ENCODE measurements at regions of chr11 and their contacts with region 1.

Region 1: DNA sequence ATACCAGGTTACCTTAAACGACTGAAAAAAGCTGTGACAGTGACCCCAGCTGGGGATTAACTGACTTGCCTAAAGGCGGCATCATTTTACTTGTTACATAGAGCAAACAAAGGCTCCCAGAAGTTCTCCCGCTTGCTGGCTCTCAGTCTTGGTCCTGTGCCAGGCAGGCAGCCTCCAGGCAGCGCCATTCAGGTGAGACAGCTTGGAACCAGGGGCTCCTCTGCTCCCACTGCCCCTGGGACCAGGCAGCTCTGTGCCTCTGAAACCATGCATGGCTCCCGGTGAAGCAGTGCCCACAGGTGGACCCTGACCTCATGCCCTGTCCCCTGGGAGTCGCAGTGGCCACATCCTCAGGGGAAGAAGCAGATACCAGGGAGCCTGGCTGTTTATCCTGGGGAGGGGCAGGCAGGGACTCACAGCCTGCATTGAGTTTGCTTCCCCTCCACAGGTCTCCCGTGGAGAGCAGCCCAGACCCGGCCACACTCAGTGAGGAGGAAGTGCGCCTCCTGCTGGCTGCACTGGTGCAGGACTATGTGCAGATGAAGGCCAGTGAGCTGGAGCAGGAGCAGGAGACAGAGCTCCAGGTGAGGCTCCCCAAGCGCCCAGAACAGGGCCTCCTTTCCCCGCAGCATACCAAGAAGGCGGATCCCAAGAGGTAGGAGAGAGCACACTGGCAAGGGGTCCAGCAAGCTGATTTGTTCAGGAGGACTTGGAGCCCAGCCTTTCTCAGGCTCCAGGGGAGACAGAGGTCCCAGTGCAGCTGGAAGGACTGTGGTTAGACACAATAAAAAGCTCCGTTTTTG is 15.6 kb upstream of the CYP2R1 start:
- DNase-seq: peak; percentile 91
- H3K4me3 Mint-ChIP-seq: no peak overlapping the region
- H3K27ac Mint-ChIP-seq: no peak overlapping the region
- H3K4me1 Mint-ChIP-seq: peaks cover 36% of the 10 kb centered on the region
- H3K27me3 Mint-ChIP-seq: no peaks in the 10 kb centered on the region

Region 2: DNA sequence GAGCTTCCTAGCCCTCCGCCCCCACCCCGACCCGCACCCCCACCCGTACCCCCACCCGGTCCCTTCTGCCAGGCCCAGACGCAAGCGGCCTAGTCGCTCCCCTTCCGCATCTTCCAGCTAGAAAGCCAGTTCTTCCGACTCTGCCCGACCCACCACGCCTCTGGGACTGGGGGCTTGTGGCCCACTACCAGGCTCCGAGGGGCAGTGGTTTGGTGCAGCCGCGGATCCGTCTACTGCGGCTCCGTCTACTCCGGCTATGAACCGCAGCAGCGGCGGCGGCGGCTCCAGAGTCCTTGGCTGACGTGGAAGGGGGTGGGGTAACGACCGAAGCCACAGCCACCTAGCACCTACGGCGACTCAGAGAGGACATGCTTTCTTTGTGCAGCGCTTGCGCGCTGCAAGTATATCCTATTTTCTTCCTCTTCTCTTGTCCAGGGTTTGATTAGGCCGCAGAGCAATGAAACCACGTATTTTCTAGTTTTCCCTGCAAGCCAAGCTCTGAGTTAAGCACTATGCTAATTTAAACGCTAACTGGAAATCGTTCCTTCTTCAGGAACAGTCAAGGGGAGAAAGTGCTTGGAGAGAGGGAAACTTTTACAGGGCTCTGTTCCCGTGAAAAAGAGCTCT is 407.9 kb before region 1 on chr11 and contains the start of gene COPB1:
- CTCF ChIA-PET with region 1: interaction called, 15 read pairs
- POLR2A ChIA-PET with region 1: no interaction called
- intact Hi-C with region 1: loop called (anchors 1 kb)
- DNase-seq: peak; percentile 96
- H3K4me3 Mint-ChIP-seq: peak within 1 kb of the TSS; percentile 96
- H3K27ac Mint-ChIP-seq: peak within 1 kb of the TSS; percentile 97
- H3K4me1 Mint-ChIP-seq: peaks cover 42% of the 10 kb centered on the region
- H3K27me3 Mint-ChIP-seq: no peaks in the 10 kb centered on the region
- total RNA-seq, gene COPB1: 107 to 108 TPM

Region 3: DNA sequence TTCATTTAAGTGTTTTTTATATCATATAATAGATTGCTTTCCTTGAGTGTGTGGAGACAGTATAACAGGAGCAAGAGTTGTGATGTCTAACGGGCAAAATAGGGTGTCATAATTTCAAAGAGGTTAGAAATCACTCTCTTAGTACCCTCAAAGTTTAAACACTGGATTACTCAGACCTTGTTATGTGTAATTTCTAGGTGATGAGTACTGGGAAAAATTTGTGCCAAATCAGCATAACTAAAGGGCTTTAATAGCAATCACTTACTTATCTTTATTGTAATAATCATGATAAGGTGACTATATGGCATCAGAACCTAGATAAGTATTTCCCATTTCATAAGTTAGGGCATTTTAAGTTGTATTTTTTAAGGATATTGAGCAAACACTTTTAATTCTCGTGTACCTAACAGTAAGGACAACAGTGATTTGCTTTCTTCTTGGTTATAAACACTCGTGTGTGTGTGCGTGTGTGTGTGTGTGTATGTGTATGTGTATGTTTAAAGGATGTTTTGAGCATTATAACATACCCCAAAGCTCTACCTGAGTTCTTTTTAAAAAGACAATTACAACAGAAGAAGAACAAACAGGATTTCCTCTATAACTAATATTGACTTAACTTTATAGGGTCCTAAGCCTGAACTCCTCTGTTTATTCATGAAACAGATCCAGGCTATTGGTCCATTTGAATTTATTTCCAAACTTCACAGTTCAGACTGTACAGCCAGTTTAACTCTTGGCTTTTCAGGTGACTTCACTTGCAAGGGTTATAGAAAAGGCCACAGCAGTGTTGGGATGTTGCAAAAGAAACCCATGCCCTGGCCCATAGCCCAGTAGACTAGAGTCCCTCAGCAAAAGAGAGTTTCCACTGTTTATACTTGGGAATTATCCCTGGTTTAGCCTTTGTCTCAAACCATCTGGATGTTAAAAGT is 287.7 kb before region 1 on chr11:
- CTCF ChIA-PET with region 1: interaction called, 29 read pairs
- POLR2A ChIA-PET with region 1: no interaction called
- intact Hi-C with region 1: no loop called
- DNase-seq: no peak
- H3K4me3 Mint-ChIP-seq: no peak overlapping the region
- H3K27ac Mint-ChIP-seq: no peak overlapping the region
- H3K4me1 Mint-ChIP-seq: peaks cover 25% of the 10 kb centered on the region
- H3K27me3 Mint-ChIP-seq: no peaks in the 10 kb centered on the region

Region 4: GRCh38 chr11:14789879-14790484 is 117.6 kb before region 1 on chr11:
- CTCF ChIA-PET with region 1: interaction called, 264 read pairs
- POLR2A ChIA-PET with region 1: interaction called, 3 read pairs
- intact Hi-C with region 1: loop called (anchors 1 kb)
- DNase-seq: no peak
- H3K4me3 Mint-ChIP-seq: no peak overlapping the region
- H3K27ac Mint-ChIP-seq: no peak overlapping the region
- H3K4me1 Mint-ChIP-seq: peaks cover 14% of the 10 kb centered on the region
- H3K27me3 Mint-ChIP-seq: no peaks in the 10 kb centered on the region

Region 5: DNA sequence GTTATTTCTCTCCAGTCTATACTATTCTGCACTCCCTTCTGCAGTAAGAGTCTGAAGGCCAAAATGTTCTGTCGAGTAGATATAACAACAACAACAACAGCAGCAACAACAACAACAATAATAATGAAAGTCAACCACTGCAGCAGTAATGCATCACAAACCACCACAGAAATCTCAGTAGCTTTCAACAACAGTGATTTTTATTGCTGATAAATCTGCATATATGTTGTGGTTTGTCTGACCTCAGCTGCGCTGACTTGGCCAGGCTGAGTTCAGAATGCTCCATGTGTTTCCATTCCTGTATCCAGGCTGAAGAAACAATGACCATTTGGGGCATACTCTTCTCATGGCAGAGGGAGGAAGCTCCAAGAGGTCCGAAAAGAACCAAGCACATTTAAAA is 16.7 kb after region 1 on chr11:
- CTCF ChIA-PET with region 1: interaction called, 68 read pairs
- POLR2A ChIA-PET with region 1: no interaction called
- intact Hi-C with region 1: no loop called
- DNase-seq: no peak
- H3K4me3 Mint-ChIP-seq: no peak overlapping the region
- H3K27ac Mint-ChIP-seq: no peak overlapping the region
- H3K4me1 Mint-ChIP-seq: no peaks in the 10 kb centered on the region
- H3K27me3 Mint-ChIP-seq: peaks cover 2% of the 10 kb centered on the region

Region 6: DNA sequence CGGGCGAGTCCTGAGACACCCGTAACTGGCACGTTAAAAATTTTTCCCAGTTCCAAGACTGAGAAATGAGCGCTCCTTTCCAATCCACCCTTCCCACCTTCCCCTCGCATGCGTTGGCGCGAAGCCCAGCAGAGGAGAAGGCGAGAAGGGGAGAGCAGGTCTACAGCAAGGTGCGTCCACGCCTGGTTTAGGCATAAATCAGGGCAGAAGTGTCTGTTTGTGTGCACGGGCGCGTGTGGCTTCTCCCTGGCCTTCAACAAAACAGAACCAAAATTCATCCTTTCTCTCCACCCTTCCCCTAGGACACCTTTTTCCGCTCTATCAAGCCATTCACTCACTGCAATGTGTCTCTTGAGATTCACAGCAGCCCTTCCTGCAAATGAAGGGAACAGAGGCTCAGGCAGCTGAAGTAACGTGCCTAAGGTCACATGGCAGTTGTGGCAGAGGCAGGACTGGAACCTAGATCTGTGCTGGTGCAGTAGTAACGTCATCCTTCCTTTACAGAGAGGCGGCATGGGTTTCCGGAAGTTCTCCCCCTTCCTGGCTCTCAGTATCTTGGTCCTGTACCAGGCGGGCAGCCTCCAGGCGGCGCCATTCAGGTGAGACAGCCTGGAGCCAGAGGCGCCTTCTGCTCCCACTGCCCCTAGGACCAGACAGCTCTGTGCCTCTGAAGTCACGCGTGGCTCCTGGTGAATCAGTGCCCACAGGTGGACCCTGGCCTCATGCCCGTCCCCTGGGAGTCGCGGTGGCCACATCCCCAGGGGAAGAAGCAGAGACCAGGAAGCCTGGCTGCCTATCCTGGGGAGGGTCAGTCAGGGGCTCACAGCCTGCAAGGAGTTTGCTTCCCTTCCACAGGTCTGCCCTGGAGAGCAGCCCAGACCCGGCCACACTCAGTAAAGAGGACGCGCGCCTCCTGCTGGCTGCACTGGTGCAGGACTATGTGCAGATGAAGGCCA is 166.9 kb after region 1 on chr11:
- CTCF ChIA-PET with region 1: interaction called, 206 read pairs
- POLR2A ChIA-PET with region 1: no interaction called
- intact Hi-C with region 1: loop called (anchors 1 kb)
- DNase-seq: peak; percentile 92
- H3K4me3 Mint-ChIP-seq: peak overlapping the region; percentile 78
- H3K27ac Mint-ChIP-seq: peak overlapping the region; percentile 26
- H3K4me1 Mint-ChIP-seq: peaks cover 17% of the 10 kb centered on the region
- H3K27me3 Mint-ChIP-seq: peaks cover 10% of the 10 kb centered on the region

Region 7: DNA sequence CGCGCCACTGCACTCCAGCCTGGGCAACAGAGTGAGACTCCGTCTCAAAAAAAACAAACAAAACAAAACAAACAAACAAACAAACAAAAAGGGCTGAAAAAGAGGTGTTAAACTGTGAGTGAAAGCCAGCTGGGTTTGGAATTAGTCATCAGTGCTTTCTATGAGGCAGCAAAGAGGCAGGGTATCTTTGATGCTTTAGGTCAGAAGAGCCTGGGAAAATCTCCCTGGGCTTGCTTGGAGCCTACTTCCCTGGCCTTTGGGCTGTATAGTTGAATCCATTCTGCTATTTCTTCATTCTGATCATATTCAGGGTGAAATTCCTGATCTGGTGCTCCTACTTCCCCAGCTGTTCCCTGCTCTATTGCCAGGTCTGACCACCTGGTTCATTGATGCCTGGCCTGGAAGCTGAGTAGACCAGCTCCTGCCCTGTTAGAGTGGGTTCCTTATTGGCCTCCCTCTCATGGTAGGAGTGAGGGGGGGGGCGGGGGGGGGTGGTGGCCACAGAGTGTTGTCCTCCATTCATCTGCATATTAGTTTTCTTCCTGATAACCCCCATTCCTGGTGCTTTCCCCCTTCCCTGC is 272.7 kb after region 1 on chr11:
- CTCF ChIA-PET with region 1: no interaction called
- POLR2A ChIA-PET with region 1: no interaction called
- intact Hi-C with region 1: no loop called
- DNase-seq: no peak
- H3K4me3 Mint-ChIP-seq: no peak overlapping the region
- H3K27ac Mint-ChIP-seq: no peak overlapping the region
- H3K4me1 Mint-ChIP-seq: no peaks in the 10 kb centered on the region
- H3K27me3 Mint-ChIP-seq: peaks cover 4% of the 10 kb centered on the region

Measured in activated CD4-positive, alpha-beta memory T cell treated with anti-CD3 and anti-CD28 coated beads for 36 hours (primary cell).